CD4-positive, alpha-beta T cell (primary cell): ENCODE measurements at regions of chrX and their contacts with region 1.

Region 1: GRCh38 chrX:41796577-41796976 is 72.6 kb downstream of the GPR82 start:
- DNase-seq: peak in 2 of 14 experiments; percentile 15 to 23
- ATAC-seq: no peak
- H3K4me3 ChIP-seq: no peak overlapping the region
- H3K4me3 Mint-ChIP-seq: no peak overlapping the region
- H3K27ac ChIP-seq: no peak overlapping the region
- H3K27ac Mint-ChIP-seq: peak overlapping the region; percentile 13
- H3K4me1 ChIP-seq: peaks cover 18% of the 10 kb centered on the region
- H3K4me1 Mint-ChIP-seq: peaks cover 35% of the 10 kb centered on the region
- H3K27me3 ChIP-seq: no peaks in the 10 kb centered on the region
- H3K27me3 Mint-ChIP-seq: no peaks in the 10 kb centered on the region
- CTCF ChIP-seq: no peak

Region 2: GRCh38 chrX:41653125-41653524 is 143.5 kb before region 1 on chrX:
- CTCF ChIA-PET with region 1: no interaction called
- POLR2A ChIA-PET with region 1: no interaction called
- intact Hi-C with region 1: no loop called
- DNase-seq: no peak
- ATAC-seq: no peak
- H3K4me3 ChIP-seq: no peak overlapping the region
- H3K4me3 Mint-ChIP-seq: no peak overlapping the region
- H3K27ac ChIP-seq: no peak overlapping the region
- H3K27ac Mint-ChIP-seq: no peak overlapping the region
- H3K4me1 ChIP-seq: no peaks in the 10 kb centered on the region
- H3K4me1 Mint-ChIP-seq: no peaks in the 10 kb centered on the region
- H3K27me3 ChIP-seq: no peaks in the 10 kb centered on the region
- H3K27me3 Mint-ChIP-seq: no peaks in the 10 kb centered on the region
- CTCF ChIP-seq: no peak

Region 3: GRCh38 chrX:41889317-41890025 is 92.9 kb after region 1 on chrX:
- CTCF ChIA-PET with region 1: no interaction called
- POLR2A ChIA-PET with region 1: no interaction called
- intact Hi-C with region 1: no loop called
- DNase-seq: no peak
- ATAC-seq: no peak
- H3K4me3 ChIP-seq: no peak overlapping the region
- H3K4me3 Mint-ChIP-seq: no peak overlapping the region
- H3K27ac ChIP-seq: no peak overlapping the region
- H3K27ac Mint-ChIP-seq: no peak overlapping the region
- H3K4me1 ChIP-seq: peaks cover 4% of the 10 kb centered on the region
- H3K4me1 Mint-ChIP-seq: peaks cover 44% of the 10 kb centered on the region
- H3K27me3 ChIP-seq: no peaks in the 10 kb centered on the region
- H3K27me3 Mint-ChIP-seq: no peaks in the 10 kb centered on the region
- CTCF ChIP-seq: no peak

Region 4: DNA sequence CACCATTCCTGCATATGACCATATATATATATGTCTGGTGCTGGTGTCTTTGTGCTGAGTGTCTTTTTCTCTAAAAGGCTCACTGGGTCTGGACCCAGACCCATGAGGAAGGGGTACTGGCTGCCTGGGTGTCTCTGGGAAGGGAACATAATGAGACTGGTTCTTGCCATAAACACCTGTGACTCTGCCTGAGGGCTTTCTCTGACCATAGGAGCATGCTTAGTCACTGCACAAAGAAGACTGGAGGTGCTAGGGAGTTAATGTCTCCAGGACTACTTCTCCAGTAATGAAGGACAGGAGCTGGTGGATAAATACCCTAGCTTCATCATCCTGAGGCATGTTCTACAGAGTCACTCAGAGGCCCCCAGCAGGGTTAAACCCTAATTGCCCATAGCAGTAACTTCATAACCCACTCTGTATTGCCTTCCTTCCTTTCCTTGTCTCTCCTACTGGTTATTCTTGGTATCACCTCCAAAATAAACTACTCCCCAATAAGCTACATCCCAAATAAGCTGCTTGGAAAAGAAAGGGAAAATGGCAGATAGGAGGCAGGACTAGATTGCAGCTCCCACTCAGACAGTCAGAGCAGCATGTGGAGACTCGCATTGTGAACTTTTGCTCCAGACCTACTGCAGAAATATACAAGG is 174.0 kb after region 1 on chrX:
- CTCF ChIA-PET with region 1: no interaction called
- POLR2A ChIA-PET with region 1: no interaction called
- intact Hi-C with region 1: no loop called
- DNase-seq: no peak
- ATAC-seq: no peak
- H3K4me3 ChIP-seq: no peak overlapping the region
- H3K4me3 Mint-ChIP-seq: no peak overlapping the region
- H3K27ac ChIP-seq: no peak overlapping the region
- H3K27ac Mint-ChIP-seq: no peak overlapping the region
- H3K4me1 ChIP-seq: no peaks in the 10 kb centered on the region
- H3K4me1 Mint-ChIP-seq: no peaks in the 10 kb centered on the region
- H3K27me3 ChIP-seq: no peaks in the 10 kb centered on the region
- H3K27me3 Mint-ChIP-seq: no peaks in the 10 kb centered on the region
- CTCF ChIP-seq: no peak

Region 5: DNA sequence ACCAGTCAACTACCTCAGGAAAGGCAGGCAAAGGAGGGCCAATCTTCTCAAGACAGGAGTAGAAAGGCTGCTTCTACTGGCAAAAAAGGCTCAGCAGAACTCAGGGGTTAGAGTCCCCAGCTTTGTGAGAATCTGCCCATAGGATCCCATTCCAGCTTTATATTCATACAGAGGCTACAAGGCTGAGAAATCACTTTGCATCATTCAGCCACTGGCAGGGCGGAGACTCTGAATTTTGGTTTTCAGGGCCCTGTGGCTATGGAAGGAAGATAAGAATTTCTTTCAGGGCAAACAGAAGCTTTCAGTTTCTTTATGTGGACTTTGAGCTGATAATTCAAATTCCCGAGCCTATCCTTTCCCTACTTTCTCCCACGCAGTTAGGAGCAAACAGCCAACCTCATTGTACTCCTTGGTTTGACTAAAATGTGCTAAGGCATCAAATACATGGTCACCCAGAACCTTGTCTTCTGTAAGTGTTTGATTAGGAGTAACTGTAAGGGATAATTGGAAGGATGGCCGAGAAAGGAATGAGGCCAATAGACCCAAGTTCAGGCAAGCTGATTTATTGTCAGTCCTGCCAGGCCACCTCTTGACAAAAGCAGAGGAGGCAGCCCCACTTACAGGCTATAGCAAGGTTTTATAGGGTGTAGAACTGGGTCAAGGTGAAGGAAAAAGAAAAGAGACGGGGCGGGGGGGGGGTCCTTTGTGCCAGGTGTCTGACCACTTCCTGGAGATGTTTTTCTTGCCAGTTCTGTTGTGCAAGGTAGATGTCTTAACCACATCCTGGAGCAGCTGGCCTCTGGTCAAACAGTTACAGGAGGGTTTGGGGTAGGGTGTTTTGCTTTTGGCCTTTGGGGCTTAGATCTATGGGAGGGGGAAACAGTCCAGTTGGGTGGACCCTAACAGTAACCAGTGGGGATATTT is 1146.7 kb after region 1 on chrX:
- CTCF ChIA-PET with region 1: no interaction called
- POLR2A ChIA-PET with region 1: interaction called, 9 read pairs
- intact Hi-C with region 1: loop called in 1 of 2 experiments (anchors 5 kb)
- DNase-seq: peak in 12 of 14 experiments; percentile 7 to 77 (median 38)
- ATAC-seq: no peak
- H3K4me3 ChIP-seq: no peak overlapping the region
- H3K4me3 Mint-ChIP-seq: peak overlapping the region; percentile 73
- H3K27ac ChIP-seq: peak overlapping the region; percentile 72 to 80
- H3K27ac Mint-ChIP-seq: peak overlapping the region; percentile 96
- H3K4me1 ChIP-seq: peaks cover 66% of the 10 kb centered on the region
- H3K4me1 Mint-ChIP-seq: peaks cover 90% of the 10 kb centered on the region
- H3K27me3 ChIP-seq: no peaks in the 10 kb centered on the region
- H3K27me3 Mint-ChIP-seq: no peaks in the 10 kb centered on the region
- CTCF ChIP-seq: no peak

Region 6: GRCh38 chrX:43121637-43122036 is 1325.1 kb after region 1 on chrX:
- CTCF ChIA-PET with region 1: interaction called, 3 read pairs
- POLR2A ChIA-PET with region 1: no interaction called
- intact Hi-C with region 1: loop called in 1 of 2 experiments (anchors 10 kb)
- DNase-seq: peak in 4 of 14 experiments; percentile 15 to 27 (median 20)
- ATAC-seq: no peak
- H3K4me3 ChIP-seq: no peak overlapping the region
- H3K4me3 Mint-ChIP-seq: no peak overlapping the region
- H3K27ac ChIP-seq: no peak overlapping the region
- H3K27ac Mint-ChIP-seq: no peak overlapping the region
- H3K4me1 ChIP-seq: no peaks in the 10 kb centered on the region
- H3K4me1 Mint-ChIP-seq: no peaks in the 10 kb centered on the region
- H3K27me3 ChIP-seq: no peaks in the 10 kb centered on the region
- H3K27me3 Mint-ChIP-seq: no peaks in the 10 kb centered on the region
- CTCF ChIP-seq: no peak

Region 7: DNA sequence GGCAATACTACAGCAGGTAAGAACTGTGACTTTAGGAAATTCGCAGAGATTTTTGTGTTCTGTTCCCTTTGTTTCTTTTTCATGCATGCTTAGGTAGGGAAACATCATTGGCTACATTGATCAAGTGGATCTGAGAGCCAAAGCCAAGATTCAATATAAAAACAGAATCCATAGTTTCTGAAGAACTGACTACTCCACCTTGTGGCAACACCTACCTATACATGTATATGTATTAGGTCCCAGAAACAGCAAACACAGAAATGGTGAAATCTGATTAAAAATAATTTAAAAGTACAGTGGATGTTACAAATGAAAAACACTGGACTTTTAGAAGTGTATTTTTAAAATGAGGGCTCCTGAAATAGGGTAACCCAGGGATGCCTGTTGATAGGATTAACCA is 1537.0 kb after region 1 on chrX:
- CTCF ChIA-PET with region 1: no interaction called
- POLR2A ChIA-PET with region 1: no interaction called
- intact Hi-C with region 1: loop called in 1 of 2 experiments (anchors 5 kb)
- DNase-seq: peak in 3 of 14 experiments; percentile 1 to 11 (median 11)
- ATAC-seq: no peak
- H3K4me3 ChIP-seq: no peak overlapping the region
- H3K4me3 Mint-ChIP-seq: no peak overlapping the region
- H3K27ac ChIP-seq: no peak overlapping the region
- H3K27ac Mint-ChIP-seq: no peak overlapping the region
- H3K4me1 ChIP-seq: no peaks in the 10 kb centered on the region
- H3K4me1 Mint-ChIP-seq: no peaks in the 10 kb centered on the region
- H3K27me3 ChIP-seq: no peaks in the 10 kb centered on the region
- H3K27me3 Mint-ChIP-seq: no peaks in the 10 kb centered on the region
- CTCF ChIP-seq: peak; percentile 16